GM10248 (cell line): ENCODE measurements at regions of chr12 and their contacts with region 1.

Region 1: DNA sequence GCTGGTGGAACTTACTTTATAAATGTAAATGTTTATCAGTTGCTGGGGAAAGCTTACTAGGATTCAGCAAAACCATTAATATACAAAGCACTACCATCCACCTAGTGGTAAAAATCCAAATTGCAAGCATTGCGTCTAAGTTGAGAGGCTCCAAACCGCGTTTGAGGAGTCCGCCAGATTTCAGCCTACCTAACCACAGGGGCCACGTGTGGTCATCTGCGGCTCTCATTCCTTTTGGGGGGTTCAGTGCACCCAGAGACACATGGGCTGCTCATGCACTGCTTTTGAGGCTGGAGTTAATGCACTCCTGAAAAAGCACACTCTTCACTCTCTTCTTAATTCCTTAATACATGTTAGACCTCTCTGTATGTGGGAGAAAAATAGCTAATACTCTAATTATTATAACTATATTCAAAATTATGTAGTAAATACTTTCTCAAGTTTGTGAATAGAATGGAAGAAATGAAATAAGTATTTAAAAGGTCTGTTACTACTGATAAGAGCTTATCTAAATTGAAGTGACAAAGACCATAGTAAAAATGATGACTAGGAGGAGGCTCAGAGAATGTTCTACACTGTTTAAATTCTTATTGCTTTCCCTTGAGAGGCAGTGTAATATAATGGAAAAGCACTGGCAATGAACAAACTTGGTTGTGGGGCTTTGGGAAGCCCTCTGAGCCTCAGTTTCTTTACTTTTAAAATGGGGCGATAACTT is 41.4 kb upstream of the MANSC4 start:
- DNase-seq: peak; percentile 47
- CTCF ChIP-seq: peak; percentile 70

Region 2: DNA sequence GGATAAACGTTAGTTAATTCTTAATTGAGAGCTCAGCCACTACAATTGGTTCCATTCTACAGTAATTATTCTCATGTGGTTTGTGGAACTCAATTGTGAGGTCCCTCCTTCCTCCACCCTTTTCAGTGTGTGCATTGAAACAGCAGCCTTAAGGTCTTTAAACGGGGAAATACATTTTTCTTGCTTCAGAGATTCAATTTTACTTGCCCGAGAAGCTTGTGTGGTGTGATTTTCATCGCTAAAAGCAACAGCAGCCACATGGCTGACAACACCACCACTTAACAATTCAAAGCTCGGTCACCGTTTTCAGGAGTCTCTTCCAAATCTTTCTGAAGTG is 298.1 kb before region 1 on chr12:
- CTCF ChIA-PET with region 1: no interaction called
- POLR2A ChIA-PET with region 1: no interaction called
- DNase-seq: peak; percentile 40
- CTCF ChIP-seq: no peak

Region 3: DNA sequence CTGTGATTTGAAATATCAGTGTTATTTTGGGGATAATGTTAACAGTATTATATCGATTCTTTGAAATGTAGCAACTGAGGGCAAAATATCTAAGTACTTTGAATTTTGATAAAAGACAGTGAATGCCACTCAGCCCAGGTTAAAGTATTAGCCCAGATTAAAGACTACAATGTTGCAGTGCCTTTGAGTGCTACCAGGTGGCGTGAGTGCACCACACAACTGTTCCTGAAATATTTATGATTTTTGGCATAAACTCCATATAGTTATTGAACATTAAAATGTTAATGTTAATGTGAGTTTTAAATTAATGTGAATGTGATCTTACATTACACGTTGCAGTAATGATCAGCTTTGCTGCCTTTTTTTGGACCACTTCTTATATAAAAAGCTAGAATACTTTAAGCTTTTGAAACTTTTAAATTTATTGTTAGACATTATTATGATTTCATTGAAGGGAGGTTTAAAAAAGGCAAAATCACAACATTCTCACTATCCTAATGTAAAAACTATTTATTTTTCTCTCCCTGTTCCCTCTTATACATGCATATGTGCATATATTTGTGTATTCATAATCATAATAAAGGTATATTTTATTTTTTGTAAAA is 88.3 kb before region 1 on chr12:
- CTCF ChIA-PET with region 1: interaction called, 49 read pairs
- POLR2A ChIA-PET with region 1: no interaction called
- DNase-seq: peak; percentile 39
- CTCF ChIP-seq: peak; percentile 83

Region 4: GRCh38 chr12:27794818-27795584 is 26.4 kb before region 1 on chr12:
- CTCF ChIA-PET with region 1: interaction called, 30 read pairs
- POLR2A ChIA-PET with region 1: interaction called, 3 read pairs
- DNase-seq: no peak
- CTCF ChIP-seq: no peak

Region 5: DNA sequence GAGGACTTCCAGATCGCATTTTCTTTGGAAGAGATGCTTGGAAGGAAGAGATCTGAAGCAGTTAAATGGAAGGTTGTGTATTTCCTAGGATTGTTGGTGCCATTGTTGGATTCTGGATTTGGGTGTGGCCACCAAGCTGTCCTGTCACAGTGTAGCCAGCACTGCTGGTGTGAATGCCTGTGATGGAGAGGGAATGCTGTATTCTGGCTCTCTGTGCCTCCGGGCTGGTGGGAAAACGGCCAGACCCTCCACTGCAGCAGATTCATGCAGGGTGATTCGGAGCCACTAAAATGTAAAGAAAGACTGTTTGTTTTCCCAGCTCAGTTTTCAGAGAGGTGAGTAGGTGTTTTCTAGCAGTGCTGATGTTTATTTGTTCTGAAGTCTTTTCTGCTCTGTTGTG is 10.7 kb before region 1 on chr12:
- CTCF ChIA-PET with region 1: interaction called, 39 read pairs
- POLR2A ChIA-PET with region 1: no interaction called
- DNase-seq: no peak
- CTCF ChIP-seq: no peak

Region 6: GRCh38 chr12:27843714-27844245 is 22.4 kb after region 1 on chr12:
- CTCF ChIA-PET with region 1: interaction called, 27 read pairs
- POLR2A ChIA-PET with region 1: no interaction called
- DNase-seq: no peak
- CTCF ChIP-seq: no peak

Region 7: DNA sequence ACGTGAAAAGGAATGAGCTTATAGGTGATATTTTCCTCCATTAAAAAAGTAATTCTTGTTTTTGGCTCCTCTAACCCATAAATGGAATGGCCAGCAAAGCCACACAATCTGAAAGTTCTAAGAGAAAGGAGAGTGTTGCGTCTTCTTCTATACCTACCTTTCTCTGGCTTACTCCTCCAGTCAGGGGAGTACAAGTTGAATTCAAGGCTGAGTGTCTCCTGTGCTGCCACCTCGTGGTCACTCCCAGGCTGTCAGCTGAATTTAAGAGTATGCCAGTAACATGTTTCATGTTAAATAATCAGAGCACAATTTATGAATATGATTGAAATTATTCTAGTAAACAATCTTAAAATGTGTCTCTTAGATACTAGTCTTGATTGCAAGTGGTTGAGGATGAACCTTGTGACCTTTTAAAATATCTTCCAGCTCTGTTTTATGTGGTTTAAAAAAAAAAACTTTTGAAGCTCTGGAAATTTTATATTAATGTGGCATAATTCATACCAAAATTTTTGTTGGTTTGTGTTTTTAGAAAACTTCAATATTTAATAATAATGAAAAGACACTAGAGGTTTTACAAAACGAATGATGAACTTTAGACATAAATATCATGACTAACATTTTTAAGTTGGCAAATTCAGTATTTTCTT is 119.5 kb after region 1 on chr12:
- CTCF ChIA-PET with region 1: interaction called, 13 read pairs
- POLR2A ChIA-PET with region 1: no interaction called
- DNase-seq: peak; percentile 66
- CTCF ChIP-seq: peak; percentile 88